ENCODE measurements at regions of chr1 and their contacts with region 1.

Region 1: DNA sequence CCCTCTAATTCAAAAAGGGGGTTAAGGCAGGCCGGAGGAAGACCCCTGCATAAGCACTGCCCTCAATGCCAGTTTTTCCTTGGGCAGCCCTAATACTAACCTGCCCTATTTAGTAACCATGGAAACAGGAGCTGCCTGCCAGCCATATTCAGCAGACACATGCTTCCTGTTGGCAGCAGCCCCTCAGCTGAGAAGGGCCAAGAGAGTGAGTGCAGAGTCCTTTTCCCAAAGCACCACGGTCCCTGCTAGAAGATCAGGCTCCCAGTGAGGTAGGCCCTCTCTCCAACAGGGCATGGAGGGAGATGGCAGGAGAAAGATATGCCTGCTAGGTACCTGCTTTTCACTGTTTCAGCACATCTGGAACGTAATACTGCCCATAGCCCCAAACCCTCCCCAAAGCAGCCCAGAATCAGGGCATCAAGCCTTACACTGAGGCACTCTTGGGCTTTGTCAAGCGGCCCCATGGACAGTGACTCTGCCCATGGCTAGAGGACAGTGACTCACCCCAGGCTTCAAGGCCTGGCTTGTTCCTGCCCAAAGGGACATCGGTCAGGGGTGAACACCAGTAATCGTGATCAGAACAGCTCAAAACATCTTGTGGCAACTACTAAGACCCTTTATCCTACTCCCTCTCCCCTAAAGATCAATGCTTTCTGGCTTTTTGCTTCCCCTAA is 64.5 kb downstream of the BCAR3 start:
- DNase-seq: peak; percentile 68
- H3K4me3 ChIP-seq: 0 out of 4 replicates have a peak overlapping the region, but pooled peaks of 1 of the 2 experiments have one; percentile 4
- H3K27ac ChIP-seq: peak overlapping the region; percentile 97 to 98
- H3K4me1 ChIP-seq: peaks cover 80 to 84% of the 10 kb centered on the region in 2 experiments
- H3K27me3 ChIP-seq: no peaks in the 10 kb centered on the region
- CTCF ChIP-seq: no peak
- EP300 ChIP-seq: no peak
- RAD21 ChIP-seq: no peak; the same call in 1 of the 2 replicates

Region 2: DNA sequence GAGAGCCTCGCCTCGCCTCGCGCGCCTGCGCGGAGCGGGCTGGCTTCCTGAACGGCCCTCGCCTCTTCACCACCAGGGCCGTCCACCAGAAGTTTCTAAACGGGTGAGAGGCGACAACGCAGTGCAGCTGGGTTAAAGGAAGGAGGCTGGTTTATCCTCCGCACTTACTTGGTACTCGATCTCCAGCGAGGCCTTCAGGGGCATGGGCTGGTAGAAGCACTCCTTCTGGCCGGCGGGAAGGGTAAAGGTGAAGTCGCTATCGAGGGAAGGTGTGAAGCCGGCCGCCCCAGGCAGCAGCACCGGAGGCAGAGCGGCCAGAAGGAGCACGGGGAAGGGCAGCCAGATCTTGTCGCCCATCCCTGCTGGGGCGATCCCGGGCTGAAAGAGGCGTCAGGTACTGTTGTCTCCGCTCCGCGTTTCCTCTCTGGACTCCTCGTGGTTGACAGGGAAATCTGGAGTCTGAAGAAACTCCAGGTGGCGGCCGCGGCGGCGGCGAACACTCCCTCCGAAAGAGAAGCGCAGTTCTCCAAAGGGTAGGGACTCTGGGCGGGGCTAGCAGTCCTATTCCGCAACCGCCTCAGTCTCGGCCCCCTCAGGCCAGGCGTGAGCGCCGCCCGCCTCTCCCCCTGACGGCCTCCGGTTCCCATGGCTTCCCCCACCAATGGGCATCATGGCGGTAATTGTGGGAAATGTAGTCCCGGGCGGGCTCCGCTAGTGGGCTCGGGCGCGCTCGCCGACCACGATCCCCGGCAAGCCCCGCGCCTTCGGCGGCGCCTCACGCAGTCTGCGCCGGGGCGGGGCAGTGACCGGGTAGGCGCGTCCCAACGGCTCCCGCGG is 437.0 kb before region 1 on chr1 and contains the start of gene TMED5:
- CTCF ChIA-PET with region 1: no interaction called
- POLR2A ChIA-PET with region 1: no interaction called
- DNase-seq: peak; percentile 94
- H3K4me3 ChIP-seq: peak within 1 kb of the TSS; percentile 86 to 96
- H3K27ac ChIP-seq: peak within 1 kb of the TSS; percentile 98
- H3K4me1 ChIP-seq: peaks cover 3 to 5% of the 10 kb centered on the region in 2 experiments; a peak in 2 of 4 replicates
- H3K27me3 ChIP-seq: no peaks in the 10 kb centered on the region
- CTCF ChIP-seq: no peak; the same call in 1 of the 2 replicates
- EP300 ChIP-seq: no peak; a peak in 1 of 4 replicates
- RAD21 ChIP-seq: no peak
- polyA plus RNA-seq, gene TMED5: 24.2 and 26.9 TPM in 2 replicates

Region 3: GRCh38 chr1:93447516-93448291 is 169.4 kb before region 1 on chr1 and contains the start of gene FNBP1L:
- CTCF ChIA-PET with region 1: interaction called, 19 read pairs
- POLR2A ChIA-PET with region 1: interaction called, 4 read pairs
- DNase-seq: peak; percentile 98
- H3K4me3 ChIP-seq: peak within 1 kb of the TSS; percentile 96 to 99
- H3K27ac ChIP-seq: peak within 1 kb of the TSS; percentile 78 to 92
- H3K4me1 ChIP-seq: peaks cover 4 to 13% of the 10 kb centered on the region in 2 experiments; a peak in 3 of 4 replicates
- H3K27me3 ChIP-seq: no peaks in the 10 kb centered on the region
- CTCF ChIP-seq: no peak
- EP300 ChIP-seq: no peak
- RAD21 ChIP-seq: no peak
- polyA plus RNA-seq, gene FNBP1L: 16.5 and 21.5 TPM in 2 replicates

Region 4: DNA sequence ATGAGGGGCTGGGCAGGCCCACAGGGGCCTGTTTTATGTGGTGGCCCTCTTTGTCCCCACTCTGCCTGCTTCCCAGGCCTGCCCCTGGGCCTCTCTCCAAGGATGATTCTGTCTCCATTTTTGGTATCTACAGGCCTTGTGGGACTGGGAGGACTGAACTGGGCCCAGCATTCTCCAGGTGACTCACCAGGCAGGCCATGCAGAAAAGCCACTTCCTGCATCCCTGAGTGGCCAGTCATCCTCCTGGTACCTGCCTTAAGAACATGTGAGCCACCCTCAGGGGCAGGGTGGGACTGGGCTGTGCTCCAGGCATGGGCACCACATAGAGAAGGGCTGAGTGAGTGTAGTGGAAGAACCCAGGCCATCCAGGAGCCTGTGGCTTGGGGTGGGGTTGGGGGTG is 84.5 kb after region 1 on chr1:
- CTCF ChIA-PET with region 1: no interaction called
- POLR2A ChIA-PET with region 1: no interaction called
- DNase-seq: peak; percentile 33
- H3K4me3 ChIP-seq: no peak overlapping the region
- H3K27ac ChIP-seq: peak overlapping the region; percentile 95
- H3K4me1 ChIP-seq: peaks cover 24 to 39% of the 10 kb centered on the region in 2 experiments
- H3K27me3 ChIP-seq: no peaks in the 10 kb centered on the region
- CTCF ChIP-seq: no peak
- EP300 ChIP-seq: peak in 1 of 2 experiments; percentile 99; a peak in 2 of 4 replicates
- RAD21 ChIP-seq: no peak

Measured in SK-N-SH (cell line).